A549 (cell line): ENCODE measurements at regions of chr1 and their contacts with region 1.

Region 1: GRCh38 chr1:1331068-1331965 is at the start of gene TAS1R3:
- DNase-seq: no peak
- ATAC-seq: peak; percentile 28 to 46; a peak in 5 of 6 replicates
- H3K4me3 ChIP-seq: no peak within 1 kb of the TSS
- H3K27ac ChIP-seq: peak within 1 kb of the TSS in 1 of 2 experiments; percentile 52; a peak in 2 of 6 replicates
- H3K4me1 ChIP-seq: peaks cover 12% of the 10 kb centered on the region; the same call in 2 of the 3 replicates
- CTCF ChIP-seq: no peak
- EP300 ChIP-seq: no peak
- POLR2A ChIP-seq: no peak
- RAD21 ChIP-seq: no peak
- polyA plus RNA-seq, gene TAS1R3: 0.05 and 0.07 TPM in 2 replicates

Region 2: DNA sequence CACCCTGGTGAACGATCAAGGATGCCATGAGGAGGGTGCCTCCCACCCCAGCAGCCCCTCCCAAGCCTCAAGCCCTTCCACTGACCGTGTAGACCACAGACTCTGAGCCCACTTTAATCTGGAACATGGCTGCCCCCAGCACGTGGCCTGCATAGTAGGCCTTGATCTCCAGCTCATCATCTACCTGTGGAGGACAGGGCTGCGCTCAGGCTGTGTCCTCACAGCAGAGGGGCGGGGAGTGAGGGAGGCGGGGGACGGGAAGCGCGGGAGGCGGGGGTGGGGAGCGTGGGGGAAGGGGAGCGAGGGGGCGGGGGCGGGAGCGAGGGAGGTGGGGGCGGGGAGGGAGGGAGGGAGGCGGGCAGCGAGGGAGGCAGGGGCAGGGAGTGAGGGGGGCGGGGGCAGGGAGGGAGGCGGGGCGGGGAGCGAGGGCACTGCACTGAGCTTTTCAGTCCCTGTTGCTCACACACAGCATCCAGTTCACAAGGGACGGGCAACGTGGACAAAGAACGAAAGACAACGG is 15.8 kb before region 1 on chr1:
- CTCF ChIA-PET with region 1: no interaction called
- POLR2A ChIA-PET with region 1: no interaction called
- DNase-seq: no peak
- ATAC-seq: no peak
- H3K4me3 ChIP-seq: no peak overlapping the region
- H3K27ac ChIP-seq: no peak overlapping the region
- H3K4me1 ChIP-seq: peaks cover 21% of the 10 kb centered on the region
- CTCF ChIP-seq: no peak
- EP300 ChIP-seq: no peak
- POLR2A ChIP-seq: no peak
- RAD21 ChIP-seq: no peak

Region 3: DNA sequence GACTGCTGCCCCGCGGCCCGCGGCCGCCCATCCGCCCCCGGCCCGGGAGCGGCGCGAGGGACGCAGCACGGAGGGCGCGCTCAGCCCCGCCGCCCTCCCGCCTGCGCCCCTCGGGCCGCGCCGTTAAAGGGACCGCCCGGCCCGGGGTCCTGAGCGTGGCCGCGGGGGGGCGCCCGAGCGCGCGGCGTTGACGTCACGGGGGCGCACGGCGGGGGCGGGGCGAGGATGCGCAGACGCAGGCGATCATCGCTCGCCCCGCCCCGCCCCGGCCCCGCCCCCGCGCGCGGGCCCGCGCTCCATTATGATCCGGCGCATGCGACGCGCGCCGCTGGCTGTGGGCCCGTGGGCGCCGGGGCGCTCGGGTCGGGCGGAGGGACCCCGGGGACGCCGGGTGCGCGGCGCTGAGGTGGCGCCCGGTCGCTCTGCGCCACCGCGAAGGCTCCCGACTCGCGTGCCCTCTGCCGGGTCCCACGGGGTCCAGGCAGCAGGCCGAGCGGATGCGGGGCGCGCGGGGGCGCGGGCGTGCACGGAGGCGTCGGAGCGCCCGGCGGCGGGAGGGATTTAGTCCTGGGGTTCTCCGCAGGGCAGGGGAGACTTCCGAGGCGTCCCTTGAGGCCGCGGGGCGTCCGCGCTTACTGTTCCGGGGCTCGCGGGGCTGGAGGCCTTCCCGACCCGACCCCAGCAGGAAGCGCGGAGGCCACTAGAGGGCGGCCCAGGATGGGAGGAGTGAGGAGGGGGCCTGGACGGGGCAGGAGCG is 18.1 kb after region 1 on chr1 and contains the start of gene DVL1:
- CTCF ChIA-PET with region 1: interaction called, 22 read pairs
- POLR2A ChIA-PET with region 1: interaction called, 3 read pairs
- DNase-seq: peak in 1 of 2 experiments; percentile 47
- ATAC-seq: 0 out of 6 replicates have a peak, but pooled peaks of 1 of the 2 experiments have one; percentile 11
- H3K4me3 ChIP-seq: peak within 1 kb of the TSS; percentile 87
- H3K27ac ChIP-seq: peak within 1 kb of the TSS; percentile 99 to 100
- H3K4me1 ChIP-seq: peaks cover 50% of the 10 kb centered on the region
- CTCF ChIP-seq: peak; percentile 37
- EP300 ChIP-seq: no peak
- POLR2A ChIP-seq: peak; percentile 38; the same call in 1 of the 2 replicates
- RAD21 ChIP-seq: peak; percentile 32 to 34; a peak in 2 of 5 replicates
- polyA plus RNA-seq, gene DVL1: 11.3 and 12.1 TPM in 2 replicates

Region 4: GRCh38 chr1:1605034-1605591 is 273.8 kb after region 1 on chr1:
- CTCF ChIA-PET with region 1: no interaction called
- POLR2A ChIA-PET with region 1: no interaction called
- DNase-seq: no peak
- ATAC-seq: no peak; a peak in 1 of 6 replicates
- H3K4me3 ChIP-seq: no peak overlapping the region
- H3K27ac ChIP-seq: no peak overlapping the region
- H3K4me1 ChIP-seq: no peaks in the 10 kb centered on the region
- CTCF ChIP-seq: no peak
- EP300 ChIP-seq: no peak
- POLR2A ChIP-seq: no peak
- RAD21 ChIP-seq: no peak